Naive thymus-derived CD4-positive, alpha-beta T cell (primary cell): ENCODE measurements at regions of chr2 and their contacts with region 1.

Region 1: GRCh38 chr2:158456309-158457066 is at the starts of genes CCDC148 and PKP4:
- DNase-seq: peak; percentile 70 to 94 (median 87)
- ATAC-seq: peak; percentile 95
- H3K4me3 ChIP-seq: peak within 1 kb of the TSS; percentile 79
- H3K4me3 Mint-ChIP-seq: peak within 1 kb of the TSS; percentile 88 to 97 (median 94)
- H3K27ac ChIP-seq: peak within 1 kb of the TSS; percentile 70
- H3K27ac Mint-ChIP-seq: peak within 1 kb of the TSS; percentile 70 to 89 (median 82)
- H3K4me1 ChIP-seq: peaks cover 0 to 11% of the 10 kb centered on the region in 2 donors
- H3K4me1 Mint-ChIP-seq: peaks cover 13 to 27% (median 22%) of the 10 kb centered on the region in 7 donors
- H3K27me3 ChIP-seq: no peaks in the 10 kb centered on the region
- H3K27me3 Mint-ChIP-seq: peaks cover 0 to 52% (median 6%) of the 10 kb centered on the region in 5 donors
- total RNA-seq, gene CCDC148: 0.54 TPM in 1 of 5 experiments, not detected in the others
- total RNA-seq, gene PKP4: 15.1 to 33.2 (median 23.2) TPM

Region 2: DNA sequence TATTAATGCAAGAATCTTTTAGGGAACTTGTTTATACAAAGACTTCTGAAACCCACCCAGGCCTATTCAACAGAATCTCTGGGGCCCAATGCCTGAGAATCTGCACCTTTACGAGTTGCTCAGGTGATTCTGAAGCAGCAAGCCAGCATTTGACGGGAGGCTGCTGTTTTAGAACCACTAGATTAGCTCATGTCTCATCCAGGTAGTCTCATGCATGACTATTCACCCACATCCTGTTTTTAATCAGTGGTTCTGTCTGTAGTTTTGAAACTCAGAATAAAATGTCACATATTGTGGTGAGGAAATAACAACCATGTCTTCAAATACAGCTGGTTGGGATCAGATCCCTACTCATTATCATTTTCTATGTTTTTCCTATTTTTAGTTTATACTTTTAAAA is 1052.1 kb before region 1 on chr2:
- CTCF ChIA-PET with region 1: interaction called, 3 read pairs
- POLR2A ChIA-PET with region 1: no interaction called
- intact Hi-C with region 1: loop called in 1 of 2 experiments (anchors 10 kb)
- DNase-seq: peak in 8 of 9 donors; percentile 44 to 92 (median 88)
- ATAC-seq: peak; percentile 98
- H3K4me3 ChIP-seq: peak overlapping the region; percentile 7
- H3K4me3 Mint-ChIP-seq: peak overlapping the region; percentile 8 to 83 (median 74)
- H3K27ac ChIP-seq: peak overlapping the region; percentile 75
- H3K27ac Mint-ChIP-seq: peak overlapping the region; percentile 91 to 100 (median 99)
- H3K4me1 ChIP-seq: peaks cover 33 to 55% of the 10 kb centered on the region in 2 donors
- H3K4me1 Mint-ChIP-seq: peaks cover 31 to 82% (median 77%) of the 10 kb centered on the region in 7 donors
- H3K27me3 ChIP-seq: no peaks in the 10 kb centered on the region
- H3K27me3 Mint-ChIP-seq: no peaks in the 10 kb centered on the region

Region 3: GRCh38 chr2:157761520-157761919 is 695.0 kb before region 1 on chr2:
- CTCF ChIA-PET with region 1: no interaction called
- POLR2A ChIA-PET with region 1: no interaction called
- intact Hi-C with region 1: loop called in 1 of 2 experiments (anchors 10 kb)
- DNase-seq: no peak
- ATAC-seq: no peak
- H3K4me3 ChIP-seq: no peak overlapping the region
- H3K4me3 Mint-ChIP-seq: no peak overlapping the region
- H3K27ac ChIP-seq: no peak overlapping the region
- H3K27ac Mint-ChIP-seq: no peak overlapping the region
- H3K4me1 ChIP-seq: no peaks in the 10 kb centered on the region
- H3K4me1 Mint-ChIP-seq: peaks cover 0 to 2% (median 0%) of the 10 kb centered on the region in 7 donors
- H3K27me3 ChIP-seq: no peaks in the 10 kb centered on the region
- H3K27me3 Mint-ChIP-seq: no peaks in the 10 kb centered on the region

Region 4: GRCh38 chr2:158006961-158007719 is 449.3 kb before region 1 on chr2:
- CTCF ChIA-PET with region 1: no interaction called
- POLR2A ChIA-PET with region 1: no interaction called
- intact Hi-C with region 1: loop called in 1 of 2 experiments (anchors 5 kb)
- DNase-seq: peak in 3 of 9 donors; percentile 14 to 20 (median 18)
- ATAC-seq: peak; percentile 55
- H3K4me3 ChIP-seq: no peak overlapping the region
- H3K4me3 Mint-ChIP-seq: no peak overlapping the region
- H3K27ac ChIP-seq: no peak overlapping the region
- H3K27ac Mint-ChIP-seq: peak overlapping the region in 1 of 9 donors; percentile 1
- H3K4me1 ChIP-seq: no peaks in the 10 kb centered on the region
- H3K4me1 Mint-ChIP-seq: peaks cover 5 to 26% (median 8%) of the 10 kb centered on the region in 7 donors
- H3K27me3 ChIP-seq: no peaks in the 10 kb centered on the region
- H3K27me3 Mint-ChIP-seq: peaks cover 0 to 9% (median 2%) of the 10 kb centered on the region in 5 donors

Region 5: DNA sequence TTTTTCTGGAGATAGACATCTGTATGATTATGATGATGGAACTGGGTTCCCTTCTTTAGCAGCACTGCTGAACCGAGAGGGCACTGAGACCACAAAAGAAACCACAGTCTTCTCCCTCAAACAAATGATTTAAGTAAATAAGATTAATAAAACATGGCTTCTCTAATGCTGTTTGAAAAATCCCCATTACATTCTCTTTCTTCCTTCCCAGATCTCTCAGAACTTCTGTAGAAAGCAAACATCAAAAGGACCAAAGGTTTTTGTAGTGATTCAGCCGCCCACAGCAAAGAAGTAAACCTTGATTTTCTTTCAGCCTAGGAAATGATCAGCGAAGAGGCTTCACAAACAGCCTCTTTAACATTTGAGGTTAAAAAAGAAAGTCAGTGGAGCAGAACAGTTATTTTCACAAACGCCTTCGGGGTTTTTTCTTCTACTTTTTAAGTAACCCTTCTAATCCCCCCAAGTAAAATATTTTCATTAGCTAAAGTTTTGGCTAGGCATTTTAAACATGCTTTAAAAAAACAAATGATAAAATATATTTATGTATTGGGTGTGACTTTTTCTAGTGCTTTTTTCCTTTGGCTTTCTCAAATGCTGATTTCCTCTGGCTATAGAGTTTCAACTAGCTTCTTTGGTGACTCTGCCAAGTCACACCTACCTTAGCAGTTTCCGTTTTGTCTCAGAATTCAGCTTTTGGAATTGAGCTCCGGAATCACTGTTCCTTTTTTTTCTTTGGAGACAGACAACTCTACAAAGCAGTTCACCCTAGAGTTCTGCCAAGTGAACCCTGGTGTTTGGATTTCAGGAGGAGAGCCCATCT is 265.2 kb before region 1 on chr2:
- CTCF ChIA-PET with region 1: no interaction called
- POLR2A ChIA-PET with region 1: no interaction called
- intact Hi-C with region 1: loop called (anchors 5 to 10 kb)
- DNase-seq: peak in 8 of 9 donors; percentile 19 to 72 (median 56)
- ATAC-seq: peak; percentile 89
- H3K4me3 ChIP-seq: no peak overlapping the region
- H3K4me3 Mint-ChIP-seq: peak overlapping the region; percentile 25 to 76 (median 60)
- H3K27ac ChIP-seq: no peak overlapping the region
- H3K27ac Mint-ChIP-seq: peak overlapping the region; percentile 0 to 80 (median 35)
- H3K4me1 ChIP-seq: peaks cover 0 to 23% of the 10 kb centered on the region in 2 donors
- H3K4me1 Mint-ChIP-seq: peaks cover 9 to 43% (median 33%) of the 10 kb centered on the region in 7 donors
- H3K27me3 ChIP-seq: no peaks in the 10 kb centered on the region
- H3K27me3 Mint-ChIP-seq: peaks cover 7 to 34% (median 19%) of the 10 kb centered on the region in 5 donors

Region 6: DNA sequence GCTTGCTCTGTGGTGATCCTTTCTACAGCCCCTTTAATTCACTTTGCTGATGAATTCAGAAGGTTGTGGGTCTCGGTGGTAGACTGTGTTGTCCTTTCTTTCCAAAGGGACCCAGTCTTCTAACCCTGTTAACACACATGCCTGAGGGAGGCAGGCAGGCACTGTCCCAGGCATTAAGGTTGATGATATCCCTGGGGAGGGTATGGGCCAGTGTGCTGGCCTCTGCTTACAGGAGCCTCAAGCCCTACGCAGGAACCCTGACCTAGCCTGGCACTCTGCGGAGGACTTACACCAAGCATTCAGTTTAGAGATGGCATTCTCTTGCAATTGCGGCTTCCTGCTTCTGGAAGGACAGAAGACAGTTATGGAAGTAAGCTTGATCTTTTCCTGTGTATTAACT is 102.8 kb after region 1 on chr2:
- CTCF ChIA-PET with region 1: no interaction called
- POLR2A ChIA-PET with region 1: no interaction called
- intact Hi-C with region 1: no loop called
- DNase-seq: no peak
- ATAC-seq: no peak
- H3K4me3 ChIP-seq: no peak overlapping the region
- H3K4me3 Mint-ChIP-seq: no peak overlapping the region
- H3K27ac ChIP-seq: no peak overlapping the region
- H3K27ac Mint-ChIP-seq: no peak overlapping the region
- H3K4me1 ChIP-seq: no peaks in the 10 kb centered on the region
- H3K4me1 Mint-ChIP-seq: peaks cover 0 to 2% (median 0%) of the 10 kb centered on the region in 7 donors
- H3K27me3 ChIP-seq: no peaks in the 10 kb centered on the region
- H3K27me3 Mint-ChIP-seq: no peaks in the 10 kb centered on the region

Region 7: DNA sequence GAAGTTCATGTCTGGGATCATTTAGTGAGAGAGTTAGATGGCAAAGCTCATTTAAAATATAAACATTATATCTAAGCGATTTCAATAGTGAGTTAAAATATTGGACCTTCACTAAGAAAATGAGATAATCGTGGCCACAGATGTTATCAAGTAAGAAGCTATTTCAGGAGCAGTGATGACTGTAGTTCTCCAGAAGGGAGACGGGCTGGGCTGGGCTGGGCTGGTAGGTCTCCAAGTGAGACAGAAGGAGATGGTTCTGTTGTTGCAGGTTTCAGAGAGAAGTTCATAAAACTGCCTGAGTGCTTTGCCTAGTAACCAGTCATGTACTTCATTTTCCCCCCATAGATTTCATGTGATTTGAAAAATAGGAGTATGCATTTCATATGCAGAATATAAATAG is 208.5 kb after region 1 on chr2:
- CTCF ChIA-PET with region 1: no interaction called
- POLR2A ChIA-PET with region 1: no interaction called
- intact Hi-C with region 1: loop called in 1 of 2 experiments (anchors 5 kb)
- DNase-seq: no peak
- ATAC-seq: no peak
- H3K4me3 ChIP-seq: no peak overlapping the region
- H3K4me3 Mint-ChIP-seq: no peak overlapping the region
- H3K27ac ChIP-seq: no peak overlapping the region
- H3K27ac Mint-ChIP-seq: no peak overlapping the region
- H3K4me1 ChIP-seq: no peaks in the 10 kb centered on the region
- H3K4me1 Mint-ChIP-seq: no peaks in the 10 kb centered on the region
- H3K27me3 ChIP-seq: no peaks in the 10 kb centered on the region
- H3K27me3 Mint-ChIP-seq: no peaks in the 10 kb centered on the region

Region 8: GRCh38 chr2:159712143-159712928 is 1255.8 kb after region 1 on chr2 and contains the start of gene MARCHF7:
- CTCF ChIA-PET with region 1: no interaction called
- POLR2A ChIA-PET with region 1: interaction called, 4 read pairs
- intact Hi-C with region 1: loop called in 1 of 2 experiments (anchors 2 kb)
- DNase-seq: peak; percentile 95 to 99 (median 98)
- ATAC-seq: peak; percentile 96
- H3K4me3 ChIP-seq: peak within 1 kb of the TSS; percentile 98
- H3K4me3 Mint-ChIP-seq: peak within 1 kb of the TSS; percentile 95 to 100 (median 100)
- H3K27ac ChIP-seq: peak within 1 kb of the TSS; percentile 90
- H3K27ac Mint-ChIP-seq: peak within 1 kb of the TSS; percentile 97 to 100 (median 99)
- H3K4me1 ChIP-seq: peaks cover 43 to 44% of the 10 kb centered on the region in 2 donors
- H3K4me1 Mint-ChIP-seq: peaks cover 36 to 63% (median 50%) of the 10 kb centered on the region in 7 donors
- H3K27me3 ChIP-seq: no peaks in the 10 kb centered on the region
- H3K27me3 Mint-ChIP-seq: no peaks in the 10 kb centered on the region
- total RNA-seq, gene MARCHF7: 64.3 to 120 (median 80.2) TPM